WTC11 (cell line): ENCODE measurements at regions of chr11 and their contacts with region 1.

Region 1: DNA sequence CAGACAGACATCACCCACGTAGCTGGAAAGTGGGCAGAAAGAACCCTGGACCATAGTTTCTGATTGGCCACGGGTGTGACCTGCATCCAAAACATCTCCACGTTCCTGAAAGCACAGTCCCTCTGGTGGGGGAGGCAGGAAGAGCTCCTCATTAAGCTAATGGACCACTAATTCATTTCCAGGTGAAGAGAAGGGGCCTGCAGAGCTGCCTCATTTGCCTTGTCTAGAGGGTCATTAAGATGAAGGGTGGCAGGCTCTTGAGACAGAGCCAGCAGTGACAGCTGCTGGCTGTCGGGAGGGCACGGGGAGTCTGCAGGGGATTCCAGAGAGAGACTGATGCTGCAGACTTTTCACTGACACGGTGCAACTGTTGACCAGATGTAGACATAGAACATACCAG is 149.6 kb upstream of the OPCML start:
- DNase-seq: peak; percentile 25
- ATAC-seq: peak; percentile 78
- H3K4me3 Mint-ChIP-seq: no peak overlapping the region
- H3K27ac Mint-ChIP-seq: no peak overlapping the region
- H3K4me1 Mint-ChIP-seq: peaks cover 12% of the 10 kb centered on the region
- H3K27me3 Mint-ChIP-seq: peaks cover 3% of the 10 kb centered on the region; the same call in 1 of the 2 replicates
- CTCF ChIP-seq: no peak

Region 2: DNA sequence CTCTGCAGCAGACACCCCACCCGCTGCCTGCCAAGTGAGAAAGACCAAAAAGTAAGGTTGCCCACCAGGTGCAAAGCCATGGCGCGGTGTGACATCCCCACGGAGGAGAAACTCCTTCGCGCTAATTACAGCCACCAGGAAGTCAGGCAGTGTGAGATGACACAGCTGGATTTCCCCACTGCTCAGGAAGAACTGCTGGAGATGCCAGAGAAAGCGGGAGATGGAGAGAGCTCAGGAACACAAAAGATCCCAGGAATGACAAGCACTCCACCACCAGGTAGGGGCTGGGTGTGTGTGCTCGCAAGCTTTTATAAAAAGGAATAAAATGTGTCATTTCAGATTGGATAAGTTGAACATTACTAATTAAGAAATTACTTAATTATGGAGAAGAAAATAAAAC is 442.3 kb before region 1 on chr11:
- CTCF ChIA-PET with region 1: no interaction called
- POLR2A ChIA-PET with region 1: interaction called, 10 read pairs
- DNase-seq: no peak
- ATAC-seq: peak; percentile 59
- H3K4me3 Mint-ChIP-seq: no peak overlapping the region
- H3K27ac Mint-ChIP-seq: no peak overlapping the region
- H3K4me1 Mint-ChIP-seq: peaks cover 59% of the 10 kb centered on the region
- H3K27me3 Mint-ChIP-seq: no peaks in the 10 kb centered on the region; the same call in 1 of the 2 replicates
- CTCF ChIP-seq: no peak

Region 3: DNA sequence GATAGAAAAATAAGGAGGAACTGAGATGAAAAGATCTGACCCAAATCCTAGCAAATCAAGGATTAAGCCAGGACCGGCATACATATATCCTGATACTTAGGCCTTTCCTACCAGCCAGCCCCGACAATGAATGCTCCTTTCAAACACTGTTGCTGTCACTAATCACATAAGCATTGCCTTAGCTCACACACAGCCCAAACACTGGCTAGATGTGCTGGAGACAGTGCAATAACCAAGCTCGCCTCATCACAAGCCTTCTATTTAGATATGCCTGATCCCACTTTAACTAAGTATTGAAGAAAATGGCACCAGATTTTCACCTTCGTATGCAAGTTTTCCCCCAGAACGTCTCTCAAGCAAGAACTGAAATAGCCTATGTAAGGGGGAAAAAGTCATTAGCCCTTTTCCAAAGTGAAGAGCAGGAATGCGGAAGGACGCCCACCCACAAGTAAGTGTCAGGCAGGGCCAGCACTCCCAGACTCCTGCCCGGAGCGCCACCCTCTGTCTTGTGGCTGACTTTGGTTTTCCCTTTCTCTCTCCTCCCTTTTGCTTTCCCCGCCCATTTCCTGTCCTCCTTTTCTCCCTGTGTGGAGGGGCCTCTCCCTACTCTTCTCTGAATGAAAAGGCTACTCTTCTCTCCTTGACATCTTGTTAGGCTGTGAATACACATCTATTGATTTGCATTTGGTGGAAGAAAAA is 140.7 kb before region 1 on chr11:
- CTCF ChIA-PET with region 1: no interaction called
- POLR2A ChIA-PET with region 1: no interaction called
- DNase-seq: peak; percentile 79
- ATAC-seq: peak; percentile 97
- H3K4me3 Mint-ChIP-seq: peak overlapping the region; percentile 48
- H3K27ac Mint-ChIP-seq: peak overlapping the region; percentile 91
- H3K4me1 Mint-ChIP-seq: peaks cover 68% of the 10 kb centered on the region
- H3K27me3 Mint-ChIP-seq: no peaks in the 10 kb centered on the region
- CTCF ChIP-seq: no peak

Region 4: GRCh38 chr11:133619973-133620372 is 61.9 kb before region 1 on chr11:
- CTCF ChIA-PET with region 1: interaction called, 27 read pairs
- POLR2A ChIA-PET with region 1: no interaction called
- DNase-seq: no peak
- ATAC-seq: no peak; the same call in 1 of the 2 replicates
- H3K4me3 Mint-ChIP-seq: no peak overlapping the region
- H3K27ac Mint-ChIP-seq: no peak overlapping the region
- H3K4me1 Mint-ChIP-seq: peaks cover 9% of the 10 kb centered on the region
- H3K27me3 Mint-ChIP-seq: no peaks in the 10 kb centered on the region
- CTCF ChIP-seq: no peak

Region 5: GRCh38 chr11:133636711-133637355 is 45.1 kb before region 1 on chr11:
- CTCF ChIA-PET with region 1: no interaction called
- POLR2A ChIA-PET with region 1: no interaction called
- DNase-seq: peak; percentile 19
- ATAC-seq: peak; percentile 43
- H3K4me3 Mint-ChIP-seq: no peak overlapping the region
- H3K27ac Mint-ChIP-seq: no peak overlapping the region
- H3K4me1 Mint-ChIP-seq: peaks cover 46% of the 10 kb centered on the region
- H3K27me3 Mint-ChIP-seq: no peaks in the 10 kb centered on the region; the same call in 1 of the 2 replicates
- CTCF ChIP-seq: no peak

Region 6: DNA sequence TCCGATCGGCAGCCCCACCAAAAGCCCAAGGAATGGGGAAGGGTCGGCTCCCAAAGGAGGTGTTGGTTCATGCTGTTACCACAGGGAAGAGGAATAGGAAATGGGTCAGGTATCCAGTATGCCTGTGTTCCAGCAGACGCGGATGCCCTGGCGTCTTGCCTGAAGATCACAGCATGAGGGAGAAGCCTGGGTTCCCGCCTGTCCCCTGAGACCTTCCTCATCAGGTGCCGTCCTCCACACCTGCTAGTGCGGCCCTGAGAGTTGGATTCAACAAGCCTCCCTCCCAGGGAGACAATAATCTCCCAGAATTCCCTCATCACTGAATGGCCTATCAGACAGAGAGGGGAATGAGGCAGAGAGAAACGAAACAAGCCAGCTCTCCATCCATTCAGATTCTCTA is 71.2 kb after region 1 on chr11:
- CTCF ChIA-PET with region 1: no interaction called
- POLR2A ChIA-PET with region 1: no interaction called
- DNase-seq: no peak
- ATAC-seq: no peak; the same call in none of the 2 replicates
- H3K4me3 Mint-ChIP-seq: no peak overlapping the region
- H3K27ac Mint-ChIP-seq: no peak overlapping the region
- H3K4me1 Mint-ChIP-seq: peaks cover 24% of the 10 kb centered on the region
- H3K27me3 Mint-ChIP-seq: no peaks in the 10 kb centered on the region
- CTCF ChIP-seq: no peak